PC-9 (cell line): ENCODE measurements at regions of chr2 and their contacts with region 1.

Region 1: GRCh38 chr2:64586883-64587481 is 62.9 kb downstream of the AFTPH start:
- DNase-seq: peak in 1 of 2 experiments; percentile 49
- H3K4me3 ChIP-seq: no peak overlapping the region
- H3K27ac ChIP-seq: no peak overlapping the region
- H3K4me1 ChIP-seq: no peaks in the 10 kb centered on the region
- H3K27me3 ChIP-seq: no peaks in the 10 kb centered on the region
- CTCF ChIP-seq: peak; percentile 88

Region 2: DNA sequence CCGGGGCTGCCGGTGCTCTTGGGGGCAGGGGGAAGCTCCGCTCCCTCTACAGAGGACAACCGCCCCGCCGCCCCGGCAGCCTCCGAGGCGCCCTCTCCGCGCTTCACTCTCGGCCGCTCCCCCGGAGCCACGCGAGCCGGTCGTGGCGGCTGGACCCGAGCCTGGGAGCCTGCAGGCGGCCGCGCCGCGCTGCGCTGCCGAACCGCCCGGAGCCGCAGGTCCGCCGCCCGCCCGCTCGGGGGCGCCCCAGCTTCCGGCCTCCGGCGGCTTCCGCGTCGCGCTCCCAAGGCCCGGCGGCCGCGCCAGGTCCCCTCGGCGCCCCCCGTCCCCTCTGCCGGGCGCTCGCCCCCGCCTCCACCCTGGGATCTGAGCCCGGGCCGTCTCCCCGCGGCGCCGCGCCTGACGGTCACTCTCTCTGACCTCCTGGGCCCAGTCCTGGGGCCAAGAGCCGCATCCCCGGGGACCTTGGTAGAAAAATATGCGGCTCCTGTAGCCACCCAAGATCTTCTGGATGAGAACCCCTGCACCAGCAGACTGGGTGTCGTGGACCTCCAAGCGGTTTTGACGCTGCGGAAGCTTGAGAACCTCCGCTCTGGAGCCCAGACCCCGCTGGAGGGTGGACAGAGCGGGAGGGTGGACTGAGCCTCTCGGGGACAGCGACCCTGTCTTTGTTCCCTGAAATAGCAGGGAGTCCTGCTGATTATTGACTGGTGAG is 22.4 kb after region 1 on chr2:
- CTCF ChIA-PET with region 1: no interaction called
- POLR2A ChIA-PET with region 1: no interaction called
- intact Hi-C with region 1: no loop called
- DNase-seq: peak in 1 of 2 experiments; percentile 74
- H3K4me3 ChIP-seq: peak overlapping the region; percentile 56
- H3K27ac ChIP-seq: peak overlapping the region; percentile 13; the same call in 1 of the 2 replicates
- H3K4me1 ChIP-seq: peaks cover 43% of the 10 kb centered on the region
- H3K27me3 ChIP-seq: no peaks in the 10 kb centered on the region
- CTCF ChIP-seq: peak; percentile 4; the same call in 1 of the 2 replicates

Region 3: DNA sequence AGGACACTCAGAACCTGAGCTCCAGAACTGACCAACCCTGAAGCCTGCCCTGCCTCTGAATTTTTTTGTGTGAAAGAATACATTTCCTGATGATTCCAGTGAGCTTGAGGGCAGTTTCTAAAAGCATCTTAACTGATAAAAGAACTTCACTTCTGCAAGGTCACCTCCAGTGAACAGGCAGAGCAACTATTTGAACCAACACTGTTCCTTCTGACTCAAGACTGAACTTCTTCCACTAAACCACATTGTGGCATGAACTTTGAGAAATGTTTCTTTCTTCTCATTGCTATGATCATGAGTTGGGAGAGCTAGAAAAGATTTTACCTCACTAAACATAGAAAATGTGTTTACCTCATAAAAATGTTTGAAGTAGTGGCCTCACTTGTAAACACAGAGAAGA is 150.6 kb after region 1 on chr2:
- CTCF ChIA-PET with region 1: no interaction called
- POLR2A ChIA-PET with region 1: interaction called, 41 read pairs
- intact Hi-C with region 1: no loop called
- DNase-seq: no peak
- H3K4me3 ChIP-seq: no peak overlapping the region
- H3K27ac ChIP-seq: no peak overlapping the region
- H3K4me1 ChIP-seq: no peaks in the 10 kb centered on the region
- H3K27me3 ChIP-seq: no peaks in the 10 kb centered on the region
- CTCF ChIP-seq: no peak

Region 4: GRCh38 chr2:64865073-64865830 is 278.3 kb after region 1 on chr2:
- CTCF ChIA-PET with region 1: interaction called, 6 read pairs
- POLR2A ChIA-PET with region 1: interaction called, 7 read pairs
- intact Hi-C with region 1: loop called (anchors 1 kb)
- DNase-seq: peak; percentile 46 to 74
- H3K4me3 ChIP-seq: peak overlapping the region; percentile 89
- H3K27ac ChIP-seq: peak overlapping the region; percentile 74
- H3K4me1 ChIP-seq: peaks cover 39% of the 10 kb centered on the region
- H3K27me3 ChIP-seq: no peaks in the 10 kb centered on the region
- CTCF ChIP-seq: no peak; the same call in 1 of the 2 replicates

Region 5: DNA sequence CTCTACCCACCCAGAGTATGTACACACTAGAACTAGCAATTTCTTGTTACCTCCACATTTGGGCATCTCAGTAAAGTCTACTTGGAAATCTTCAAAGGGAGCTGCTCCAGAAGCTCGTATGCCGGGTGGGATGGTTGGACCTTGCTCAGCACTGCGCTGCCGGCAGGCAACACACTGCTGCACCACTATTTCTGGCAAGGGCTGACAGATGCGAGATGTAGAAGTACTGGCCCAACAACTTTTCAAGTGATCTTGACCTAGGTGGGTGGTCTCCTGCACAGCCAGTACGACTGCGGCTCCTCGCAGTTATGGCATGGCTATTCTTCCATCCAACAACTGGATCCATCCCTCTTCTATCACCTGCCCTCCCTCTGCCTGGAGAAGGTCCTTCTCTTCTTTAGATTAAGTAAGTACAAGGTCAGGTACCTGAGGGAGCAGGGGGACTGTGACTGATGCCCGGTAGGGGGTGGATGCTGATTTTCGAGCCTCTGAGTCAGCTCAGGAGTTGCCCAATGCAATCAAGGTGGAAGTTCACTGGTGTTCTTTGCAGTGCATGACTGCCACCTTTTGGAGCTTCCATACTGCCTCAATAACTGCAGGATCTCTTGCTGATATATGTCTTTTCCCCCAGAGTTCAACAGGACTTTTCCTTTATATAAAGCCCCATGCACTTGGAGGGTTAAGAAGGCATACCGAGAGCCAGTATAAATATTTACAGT is 301.8 kb after region 1 on chr2:
- CTCF ChIA-PET with region 1: interaction called, 3 read pairs
- POLR2A ChIA-PET with region 1: no interaction called
- intact Hi-C with region 1: loop called (anchors 5 kb)
- DNase-seq: peak; percentile 80 to 92
- H3K4me3 ChIP-seq: no peak overlapping the region
- H3K27ac ChIP-seq: no peak overlapping the region
- H3K4me1 ChIP-seq: peaks cover 8% of the 10 kb centered on the region
- H3K27me3 ChIP-seq: no peaks in the 10 kb centered on the region
- CTCF ChIP-seq: peak; percentile 79

Region 6: DNA sequence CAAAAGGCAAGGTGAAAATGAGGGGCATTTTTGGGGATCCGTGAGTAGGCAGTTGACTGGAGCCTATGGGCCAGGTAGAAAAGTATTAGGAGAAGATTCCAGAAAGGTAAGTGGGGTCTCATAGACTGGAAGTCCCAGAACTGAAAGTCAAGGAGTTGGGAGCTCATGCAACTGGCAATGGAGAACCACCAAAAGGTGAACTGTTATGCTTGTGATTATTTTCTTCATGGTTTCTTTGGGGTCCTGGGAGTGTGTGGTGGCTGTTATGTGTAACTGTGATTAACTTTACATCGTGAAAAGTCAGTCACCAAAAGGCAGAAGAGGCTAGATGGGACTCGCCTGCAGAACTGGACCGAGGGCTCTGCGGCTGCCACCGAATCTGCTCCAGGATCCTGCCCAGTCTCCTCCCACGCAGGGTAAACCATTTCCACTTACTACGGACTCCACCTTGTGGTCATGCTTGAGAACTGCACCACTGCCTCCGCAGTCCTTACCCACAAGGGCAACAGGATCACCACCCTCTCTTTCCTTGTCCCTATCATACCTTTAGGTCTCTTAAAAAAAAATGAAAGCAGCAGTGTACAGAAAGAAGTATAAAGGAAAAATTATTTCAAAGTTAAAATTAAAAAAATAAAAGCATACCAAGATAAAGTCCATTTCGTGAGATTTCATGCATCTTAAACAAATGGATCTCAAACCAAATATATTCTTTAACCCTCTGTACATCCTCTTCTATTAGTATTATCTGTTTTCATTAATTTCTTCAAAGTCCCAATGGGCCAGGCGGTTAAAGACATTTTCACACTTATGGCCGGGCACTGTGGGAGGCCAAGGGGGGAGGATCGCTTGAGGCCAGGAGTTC is 453.6 kb after region 1 on chr2:
- CTCF ChIA-PET with region 1: no interaction called
- POLR2A ChIA-PET with region 1: no interaction called
- intact Hi-C with region 1: loop called (anchors 5 kb)
- DNase-seq: peak; percentile 58 to 76
- H3K4me3 ChIP-seq: no peak overlapping the region
- H3K27ac ChIP-seq: no peak overlapping the region
- H3K4me1 ChIP-seq: 0 out of 2 replicates have a peak, but pooled peaks cover 2% of the 10 kb centered on the region
- H3K27me3 ChIP-seq: no peaks in the 10 kb centered on the region
- CTCF ChIP-seq: peak; percentile 98